ENCODE measurements at regions of chr2 and their contacts with region 1.

Region 1: GRCh38 chr2:68925295-68925896 is 27.3 kb downstream of the GKN2 start:
- DNase-seq: no peak
- H3K4me3 ChIP-seq: no peak overlapping the region
- H3K27ac ChIP-seq: no peak overlapping the region
- H3K4me1 ChIP-seq: no peaks in the 10 kb centered on the region
- H3K27me3 ChIP-seq: peaks cover 57% of the 10 kb centered on the region
- CTCF ChIP-seq: peak; percentile 87

Region 2: GRCh38 chr2:68467077-68467960 is 458.1 kb before region 1 on chr2 and contains the starts of genes APLF and FBXO48:
- intact Hi-C with region 1: loop called (anchors 10 kb)
- DNase-seq: peak; percentile 98
- H3K4me3 ChIP-seq: peak within 1 kb of the TSS; percentile 90
- H3K27ac ChIP-seq: peak within 1 kb of the TSS; percentile 88
- H3K4me1 ChIP-seq: peaks cover 35% of the 10 kb centered on the region
- H3K27me3 ChIP-seq: no peaks in the 10 kb centered on the region
- CTCF ChIP-seq: no peak
- total RNA-seq, gene APLF: 4.8 TPM
- total RNA-seq, gene FBXO48: 1.0 TPM